WTC11 (cell line): ENCODE measurements at regions of chr18 and their contacts with region 1.

Region 1: DNA sequence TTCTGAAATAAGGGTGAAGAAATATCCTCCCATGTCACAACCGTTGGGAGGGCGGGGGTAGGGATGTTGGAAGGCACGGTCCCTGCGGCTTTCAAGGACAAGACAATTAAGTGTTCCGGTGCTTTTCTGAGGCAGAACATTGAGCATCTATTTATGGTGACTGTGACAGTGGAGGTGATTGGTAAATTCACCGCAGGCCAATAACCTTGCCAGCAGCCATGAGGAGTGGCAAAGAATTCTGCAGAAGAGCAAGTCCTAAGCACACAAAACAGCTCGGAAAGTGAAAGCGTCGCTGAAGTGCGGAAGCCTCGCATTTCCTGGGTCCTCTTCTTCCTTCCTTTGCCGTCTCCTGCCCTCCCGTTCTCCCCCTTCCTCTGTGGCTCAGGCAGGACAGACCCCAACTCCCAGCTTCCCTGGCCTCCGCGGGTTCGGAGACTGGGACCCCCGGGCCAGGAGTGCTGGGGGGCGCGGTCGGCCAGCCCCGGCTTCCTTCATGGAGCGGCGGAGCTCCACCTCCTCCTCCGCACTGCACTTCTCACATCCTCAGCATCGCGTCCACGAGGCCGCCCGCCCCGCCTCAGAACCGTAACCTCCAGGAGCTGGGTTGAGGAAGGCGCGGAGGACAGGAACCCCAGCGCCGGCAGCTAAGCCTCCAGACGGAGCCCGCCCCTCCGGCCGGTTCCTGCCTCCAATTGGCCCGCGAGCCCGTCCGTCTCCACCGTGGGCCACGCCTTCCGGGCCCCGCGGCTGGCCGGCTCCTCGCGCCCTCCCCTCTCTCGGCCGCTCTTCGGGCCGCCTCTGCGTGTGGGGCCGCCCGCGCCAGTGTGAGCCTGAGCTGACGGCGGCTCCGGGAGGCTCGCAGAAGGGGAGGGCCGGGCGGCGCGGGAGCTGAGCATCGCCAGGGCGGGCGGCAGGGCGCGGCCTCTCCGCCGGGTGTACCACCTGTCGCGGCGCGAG is at the start of gene ME2:
- DNase-seq: peak; percentile 90
- ATAC-seq: peak; percentile 98
- H3K4me3 Mint-ChIP-seq: peak within 1 kb of the TSS; percentile 89
- H3K27ac Mint-ChIP-seq: peak within 1 kb of the TSS; percentile 94
- H3K4me1 Mint-ChIP-seq: peaks cover 20% of the 10 kb centered on the region
- H3K27me3 Mint-ChIP-seq: no peaks in the 10 kb centered on the region
- CTCF ChIP-seq: no peak
- total RNA-seq, gene ME2: 51.9 to 57.0 TPM (median 53.5 TPM) in 3 replicates

Region 2: DNA sequence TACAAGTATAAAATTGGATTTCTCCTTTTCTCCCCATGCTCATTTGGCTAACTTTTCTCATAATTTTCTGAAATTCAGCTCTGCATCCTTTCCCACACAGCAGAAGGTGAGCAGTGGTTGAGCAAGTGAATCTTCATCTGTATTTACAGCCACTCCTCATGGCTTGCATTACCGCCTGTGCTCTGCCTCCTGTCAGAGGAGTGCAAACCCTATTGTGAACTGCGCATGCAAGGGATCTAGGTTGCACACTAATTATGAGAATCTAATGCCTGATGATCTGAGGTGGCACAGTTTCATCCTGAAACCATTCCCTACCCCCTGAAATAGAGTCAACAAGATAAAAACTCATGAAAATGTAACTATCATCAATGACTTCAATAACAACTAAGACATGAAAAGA is 20.3 kb after region 1 on chr18:
- CTCF ChIA-PET with region 1: no interaction called
- POLR2A ChIA-PET with region 1: no interaction called
- DNase-seq: no peak
- ATAC-seq: no peak
- H3K4me3 Mint-ChIP-seq: no peak overlapping the region
- H3K27ac Mint-ChIP-seq: no peak overlapping the region
- H3K4me1 Mint-ChIP-seq: peaks cover 23% of the 10 kb centered on the region
- H3K27me3 Mint-ChIP-seq: no peaks in the 10 kb centered on the region; the same call in 1 of the 2 replicates
- CTCF ChIP-seq: no peak

Region 3: GRCh38 chr18:50967714-50968661 is 89.4 kb after region 1 on chr18 and contains the start of gene ELAC1:
- CTCF ChIA-PET with region 1: no interaction called
- POLR2A ChIA-PET with region 1: interaction called, 11 read pairs
- DNase-seq: peak; percentile 71
- ATAC-seq: peak; percentile 92
- H3K4me3 Mint-ChIP-seq: peak within 1 kb of the TSS; percentile 83
- H3K27ac Mint-ChIP-seq: peak within 1 kb of the TSS; percentile 76; the same call in 1 of the 2 replicates
- H3K4me1 Mint-ChIP-seq: peaks cover 22% of the 10 kb centered on the region
- H3K27me3 Mint-ChIP-seq: no peaks in the 10 kb centered on the region; the same call in none of the 2 replicates
- CTCF ChIP-seq: no peak
- total RNA-seq, gene ELAC1: 3.9 to 4.3 TPM (median 4.0 TPM) in 3 replicates

Region 4: DNA sequence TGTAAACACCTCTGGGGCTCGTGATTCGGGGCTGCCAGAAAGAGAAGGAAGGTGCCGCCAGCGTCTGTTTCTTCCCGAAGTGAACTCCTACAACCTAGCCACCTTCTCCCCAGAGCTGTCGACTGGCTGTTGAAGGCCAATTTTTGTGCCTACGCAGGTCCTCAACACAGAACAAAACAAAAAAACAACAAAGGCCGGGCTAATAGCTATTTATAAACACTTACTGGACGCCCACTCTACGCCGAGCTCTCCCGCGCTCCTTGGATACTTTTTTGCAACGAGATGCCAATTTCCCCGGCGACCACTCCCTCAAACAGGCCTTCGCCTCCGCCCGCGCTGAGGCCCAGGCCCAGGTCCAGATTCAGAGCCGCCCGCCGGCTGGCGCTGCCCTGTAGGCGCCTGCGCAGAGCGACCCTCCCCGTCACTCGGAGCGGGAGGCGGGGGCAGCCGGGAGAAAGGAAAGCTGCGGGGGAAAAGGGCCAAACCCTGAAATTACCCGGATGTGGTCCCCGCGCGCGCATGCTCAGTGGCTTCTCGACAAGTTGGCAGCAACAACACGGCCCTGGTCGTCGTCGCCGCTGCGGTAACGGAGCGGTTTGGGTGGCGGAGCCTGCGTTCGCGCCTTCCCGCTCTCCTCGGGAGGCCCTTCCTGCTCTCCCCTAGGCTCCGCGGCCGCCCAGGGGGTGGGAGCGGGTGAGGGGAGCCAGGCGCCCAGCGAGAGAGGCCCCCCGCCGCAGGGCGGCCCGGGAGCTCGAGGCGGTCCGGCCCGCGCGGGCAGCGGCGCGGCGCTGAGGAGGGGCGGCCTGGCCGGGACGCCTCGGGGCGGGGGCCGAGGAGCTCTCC is 151.3 kb after region 1 on chr18 and contains the start of gene SMAD4:
- CTCF ChIA-PET with region 1: interaction called, 3 read pairs
- POLR2A ChIA-PET with region 1: interaction called, 12 read pairs
- DNase-seq: peak; percentile 99
- ATAC-seq: peak; percentile 91
- H3K4me3 Mint-ChIP-seq: peak within 1 kb of the TSS; percentile 98
- H3K27ac Mint-ChIP-seq: peak within 1 kb of the TSS; percentile 97
- H3K4me1 Mint-ChIP-seq: peaks cover 60% of the 10 kb centered on the region
- H3K27me3 Mint-ChIP-seq: no peaks in the 10 kb centered on the region
- CTCF ChIP-seq: no peak
- total RNA-seq, gene SMAD4: 105 to 107 TPM (median 107 TPM) in 3 replicates

Region 5: GRCh38 chr18:51196118-51196810 is 317.6 kb after region 1 on chr18:
- CTCF ChIA-PET with region 1: no interaction called
- POLR2A ChIA-PET with region 1: no interaction called
- DNase-seq: peak; percentile 12
- ATAC-seq: no peak
- H3K4me3 Mint-ChIP-seq: peak overlapping the region; percentile 96
- H3K27ac Mint-ChIP-seq: peak overlapping the region; percentile 50
- H3K4me1 Mint-ChIP-seq: peaks cover 39% of the 10 kb centered on the region
- H3K27me3 Mint-ChIP-seq: no peaks in the 10 kb centered on the region
- CTCF ChIP-seq: no peak